ENCODE measurements at regions of chr15 and their contacts with region 1.

Region 1: DNA sequence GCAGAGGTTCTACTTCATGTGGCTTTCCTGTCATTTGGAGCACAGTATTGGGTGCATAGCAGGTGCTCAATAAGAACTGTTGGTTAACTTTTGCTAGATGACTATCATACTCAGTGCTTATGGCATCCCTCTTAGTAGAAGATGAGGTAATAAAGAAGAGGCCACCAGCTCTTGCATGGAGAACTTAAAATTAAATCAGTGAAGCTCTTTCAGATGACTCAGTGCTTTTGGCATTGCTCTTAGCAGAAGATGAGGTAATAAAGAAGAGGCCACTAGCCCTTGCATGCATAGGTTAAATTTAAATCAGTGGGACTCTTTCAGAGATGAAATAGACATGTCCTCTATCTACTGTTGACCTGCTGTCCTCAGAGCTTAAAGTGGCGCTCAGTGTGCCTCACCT is 109.4 kb upstream of the FGF7 start:
- DNase-seq: no peak
- H3K4me3 ChIP-seq: no peak overlapping the region
- CTCF ChIP-seq: no peak
- POLR2A ChIP-seq: no peak

Region 2: DNA sequence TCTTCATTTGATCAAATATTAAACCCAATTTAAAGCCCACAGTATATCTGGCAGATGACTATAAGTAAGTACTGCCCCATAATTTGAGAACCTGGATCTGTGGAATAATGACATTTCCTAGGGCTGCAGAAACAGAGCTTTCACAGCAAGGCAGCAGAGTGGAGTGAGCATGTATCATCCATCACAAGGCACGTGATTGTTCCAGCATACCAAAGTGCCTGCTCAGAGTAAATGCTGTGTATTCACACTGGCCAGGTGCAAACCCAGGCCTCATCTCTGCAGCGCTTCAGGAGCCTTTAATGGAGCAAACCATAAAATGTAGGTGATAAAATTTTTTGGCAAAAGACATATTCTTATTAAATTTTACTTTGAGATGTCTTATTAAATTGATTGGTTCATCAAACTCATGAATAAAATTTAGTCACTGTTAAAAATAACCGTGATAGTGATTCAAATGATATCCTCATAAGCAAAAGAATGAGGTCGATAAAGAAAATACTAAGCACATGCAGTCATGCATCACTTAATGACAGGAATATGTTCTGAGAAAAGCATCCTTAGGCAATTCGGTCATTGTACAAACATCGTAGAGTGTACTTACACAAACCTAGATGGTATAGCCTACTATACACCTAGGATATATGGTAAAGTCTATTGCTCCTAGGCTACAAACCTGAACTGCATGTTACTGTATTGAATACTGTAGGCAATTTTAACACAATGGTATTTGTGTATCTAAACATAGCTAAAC is 1292.1 kb before region 1 on chr15:
- intact Hi-C with region 1: no loop called
- DNase-seq: no peak
- H3K4me3 ChIP-seq: no peak overlapping the region
- CTCF ChIP-seq: no peak
- POLR2A ChIP-seq: no peak

Region 3: GRCh38 chr15:49751751-49752150 is 438.1 kb after region 1 on chr15:
- intact Hi-C with region 1: loop called (anchors 2 kb)
- DNase-seq: no peak
- H3K4me3 ChIP-seq: no peak overlapping the region
- CTCF ChIP-seq: no peak
- POLR2A ChIP-seq: no peak